ENCODE measurements at regions of chr4 and their contacts with region 1.

Region 1: DNA sequence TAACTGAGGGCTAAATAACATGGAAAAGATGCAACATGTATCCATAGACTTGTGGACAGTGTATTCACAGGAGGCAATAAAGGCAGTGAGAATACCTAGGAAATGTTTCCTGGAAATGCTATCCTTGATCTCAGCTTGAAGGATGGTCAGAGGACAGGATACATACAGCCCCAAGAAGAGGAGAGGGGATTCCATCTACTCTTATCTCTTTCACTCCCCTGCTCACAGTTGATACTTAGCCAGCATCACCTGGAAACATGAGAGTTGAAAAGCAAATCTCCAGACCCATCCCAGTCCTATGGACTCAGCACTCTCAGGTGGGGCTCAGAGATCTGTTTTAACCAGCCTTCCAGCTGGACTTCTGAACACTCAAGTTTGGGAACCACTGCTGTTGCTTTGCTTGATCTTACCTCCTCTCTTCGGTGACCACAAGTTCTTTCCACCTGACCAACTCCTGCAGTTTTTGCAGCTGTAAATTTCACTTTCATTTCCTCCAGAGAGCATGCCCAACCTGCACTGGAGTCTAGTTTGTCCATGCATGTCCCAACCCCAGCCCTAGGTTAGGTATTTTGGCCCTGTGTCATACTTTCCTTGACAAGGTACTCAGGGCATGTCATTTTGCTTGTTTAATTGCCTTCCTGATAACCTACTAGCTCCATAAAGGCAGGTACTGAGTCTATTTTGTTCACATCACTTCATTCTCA is 10.4 kb downstream of the RELL1 start:
- DNase-seq: no peak

Region 2: DNA sequence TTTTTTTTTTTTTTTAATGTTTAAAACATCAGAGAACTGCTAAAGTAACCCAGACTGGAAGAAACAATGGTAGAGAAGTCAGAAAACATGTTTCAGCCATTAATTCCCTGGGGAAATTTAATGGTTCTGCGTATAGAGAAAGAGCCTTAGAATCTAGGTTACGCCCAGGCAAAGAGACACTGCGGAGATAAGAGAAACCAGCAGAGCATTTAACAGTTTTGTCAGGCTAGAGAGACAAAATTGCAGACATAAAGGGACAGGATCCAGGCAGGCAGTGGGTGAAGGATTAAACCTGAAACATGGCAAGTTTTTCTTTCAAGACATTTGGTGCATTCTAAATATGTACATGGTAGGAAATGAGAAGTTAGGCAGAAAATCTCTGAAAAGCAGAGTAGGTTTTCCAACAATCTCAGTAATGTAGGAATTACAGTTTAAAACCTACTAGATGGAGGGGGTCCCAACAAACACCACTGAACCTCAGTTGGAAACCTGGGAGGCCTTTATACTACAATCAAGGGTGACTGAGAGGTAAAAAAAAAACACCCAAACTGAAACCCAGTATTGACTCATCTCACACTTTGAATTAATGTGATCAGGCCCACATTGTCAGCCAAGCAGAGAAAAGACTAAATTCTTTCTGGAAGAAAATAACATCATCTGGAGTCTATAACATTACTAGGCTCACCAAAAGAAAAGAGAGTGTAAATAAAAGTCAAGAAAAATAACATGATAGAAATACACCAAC is 685.4 kb before region 1 on chr4:
- intact Hi-C with region 1: no loop called
- DNase-seq: no peak

Region 3: GRCh38 chr4:37628977-37629609 is 46.6 kb before region 1 on chr4:
- intact Hi-C with region 1: loop called in 1 of 2 experiments (anchors 10 kb)
- DNase-seq: no peak

Region 4: GRCh38 chr4:37648096-37648817 is 27.5 kb before region 1 on chr4:
- intact Hi-C with region 1: no loop called
- DNase-seq: peak; percentile 85

Region 5: DNA sequence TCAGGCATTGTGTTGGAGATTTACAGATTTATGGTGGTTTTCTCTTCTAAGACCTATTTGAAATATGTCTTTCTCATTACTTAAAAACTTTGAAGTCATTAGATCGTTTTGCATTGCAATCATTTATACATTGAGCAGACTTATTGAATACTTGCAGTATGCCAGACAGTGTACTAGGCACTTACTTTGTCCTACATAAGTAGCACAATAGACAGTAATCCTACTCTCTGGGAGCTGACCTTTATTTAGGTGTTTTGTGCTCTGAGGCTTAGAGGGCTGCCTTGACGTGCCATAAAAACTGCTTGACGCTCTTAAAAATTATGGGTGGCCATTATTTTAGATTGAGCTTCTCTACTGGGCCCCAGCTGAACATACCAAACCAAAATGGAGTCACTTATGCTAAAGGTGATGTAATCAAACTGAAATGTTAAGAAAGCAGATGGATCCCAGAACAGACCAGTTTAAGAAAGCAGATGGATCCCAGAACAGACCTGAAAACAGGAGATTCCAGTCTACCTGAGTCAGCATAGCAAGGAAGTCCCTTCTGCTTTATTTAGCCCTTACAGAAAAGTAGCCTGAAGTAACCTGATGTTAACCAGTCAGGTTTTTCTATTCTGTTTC is 326.8 kb after region 1 on chr4:
- intact Hi-C with region 1: no loop called
- DNase-seq: no peak